MCF 10A (cell line): ENCODE measurements at regions of chr1 and their contacts with region 1.

Region 1: DNA sequence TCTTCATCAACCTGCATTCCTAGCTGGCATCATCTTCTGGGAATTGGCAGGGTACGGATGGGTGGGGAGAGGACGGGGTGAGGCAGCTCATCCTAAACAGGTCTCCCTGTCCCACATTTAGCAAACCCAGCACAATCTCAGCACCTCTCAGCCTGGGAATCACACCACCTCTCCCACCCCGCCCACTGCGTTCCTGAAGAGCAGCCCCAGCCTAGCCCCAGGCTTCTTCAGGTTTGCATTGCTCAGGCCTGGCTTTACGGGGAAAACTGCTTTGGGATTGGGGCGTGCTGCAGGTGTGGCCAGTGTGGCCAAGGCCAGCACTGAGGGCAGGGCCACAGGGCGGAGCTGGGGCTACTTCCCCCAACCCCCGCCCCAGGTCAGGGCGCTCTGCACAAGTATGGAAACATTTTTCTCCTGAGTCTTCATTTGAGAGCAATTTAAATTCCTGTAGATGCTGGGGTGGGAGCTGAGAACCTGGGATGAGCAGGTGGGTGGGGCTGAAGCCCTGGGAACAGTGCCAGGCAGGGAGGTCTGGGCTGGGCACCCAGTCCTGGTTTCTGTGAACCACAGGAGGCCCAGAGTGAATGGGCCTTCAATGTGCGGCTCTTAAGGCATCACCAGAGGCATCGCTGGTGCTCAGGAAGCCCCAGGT is 24.2 kb downstream of the TNNT2 start:
- DNase-seq: peak; percentile 79
- H3K4me3 Mint-ChIP-seq: no peak overlapping the region
- H3K27ac Mint-ChIP-seq: peak overlapping the region; percentile 63
- H3K4me1 Mint-ChIP-seq: peaks cover 37% of the 10 kb centered on the region
- H3K27me3 Mint-ChIP-seq: peaks cover 10% of the 10 kb centered on the region
- CTCF ChIP-seq: no peak

Region 2: GRCh38 chr1:201268604-201269151 is 84.6 kb before region 1 on chr1:
- CTCF ChIA-PET with region 1: interaction called, 182 read pairs
- POLR2A ChIA-PET with region 1: interaction called, 36 read pairs
- intact Hi-C with region 1: no loop called
- DNase-seq: peak; percentile 99
- H3K4me3 Mint-ChIP-seq: no peak overlapping the region
- H3K27ac Mint-ChIP-seq: peak overlapping the region; percentile 89
- H3K4me1 Mint-ChIP-seq: peaks cover 48% of the 10 kb centered on the region
- H3K27me3 Mint-ChIP-seq: no peaks in the 10 kb centered on the region
- CTCF ChIP-seq: no peak

Region 3: DNA sequence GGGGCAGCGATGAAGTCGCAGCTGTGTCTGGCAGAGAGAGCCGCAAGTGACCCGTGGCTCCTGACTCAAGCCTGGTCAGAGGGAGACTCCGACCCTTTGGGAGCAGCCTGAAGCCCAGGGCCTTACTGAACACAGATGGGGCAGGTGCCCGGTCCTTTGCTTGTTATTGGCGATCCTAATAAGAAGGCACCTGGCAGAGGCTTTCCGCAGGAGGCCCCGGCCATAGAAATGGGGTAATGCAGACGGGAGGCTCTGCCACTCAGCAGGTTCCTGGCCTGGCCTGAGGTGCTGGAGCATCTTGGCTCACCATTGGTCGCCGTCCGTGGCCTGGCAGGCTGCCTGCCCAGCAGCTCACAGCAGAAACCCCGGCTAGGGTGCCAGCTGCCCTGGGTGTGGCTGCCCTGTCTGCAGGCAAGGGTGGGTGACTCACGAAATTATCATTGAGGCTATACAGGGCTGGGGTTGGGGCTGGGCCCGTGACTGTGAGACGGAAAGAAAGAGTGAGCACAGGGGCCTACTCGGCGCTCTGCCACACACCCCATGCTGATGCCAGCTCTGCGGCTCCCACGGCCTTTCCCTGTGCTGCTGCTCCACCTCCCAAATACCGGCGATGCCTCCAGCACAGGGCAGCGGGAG is 78.1 kb before region 1 on chr1:
- CTCF ChIA-PET with region 1: interaction called, 19 read pairs
- POLR2A ChIA-PET with region 1: interaction called, 10 read pairs
- intact Hi-C with region 1: no loop called
- DNase-seq: peak; percentile 100
- H3K4me3 Mint-ChIP-seq: no peak overlapping the region
- H3K27ac Mint-ChIP-seq: peak overlapping the region; percentile 79
- H3K4me1 Mint-ChIP-seq: peaks cover 52% of the 10 kb centered on the region
- H3K27me3 Mint-ChIP-seq: no peaks in the 10 kb centered on the region
- CTCF ChIP-seq: no peak

Region 4: GRCh38 chr1:201288766-201289165 is 64.5 kb before region 1 on chr1:
- CTCF ChIA-PET with region 1: interaction called, 89 read pairs
- POLR2A ChIA-PET with region 1: interaction called, 159 read pairs
- intact Hi-C with region 1: no loop called
- DNase-seq: peak; percentile 64
- H3K4me3 Mint-ChIP-seq: peak overlapping the region; percentile 15
- H3K27ac Mint-ChIP-seq: peak overlapping the region; percentile 83
- H3K4me1 Mint-ChIP-seq: peaks cover 28% of the 10 kb centered on the region
- H3K27me3 Mint-ChIP-seq: no peaks in the 10 kb centered on the region
- CTCF ChIP-seq: peak; percentile 7